ENCODE measurements at regions of chr1 and their contacts with region 1.

Region 1: GRCh38 chr1:173050865-173051264 is at the start of gene TNFSF18:
- DNase-seq: no peak
- ATAC-seq: no peak
- H3K4me3 ChIP-seq: no peak within 1 kb of the TSS
- H3K27ac ChIP-seq: no peak within 1 kb of the TSS
- H3K4me1 ChIP-seq: no peaks in the 10 kb centered on the region
- H3K27me3 ChIP-seq: no peaks in the 10 kb centered on the region; a peak in 1 of 4 replicates
- CTCF ChIP-seq: no peak
- EP300 ChIP-seq: no peak
- POLR2A ChIP-seq: no peak
- RAD21 ChIP-seq: no peak
- polyA plus RNA-seq, gene TNFSF18: not detected

Region 2: DNA sequence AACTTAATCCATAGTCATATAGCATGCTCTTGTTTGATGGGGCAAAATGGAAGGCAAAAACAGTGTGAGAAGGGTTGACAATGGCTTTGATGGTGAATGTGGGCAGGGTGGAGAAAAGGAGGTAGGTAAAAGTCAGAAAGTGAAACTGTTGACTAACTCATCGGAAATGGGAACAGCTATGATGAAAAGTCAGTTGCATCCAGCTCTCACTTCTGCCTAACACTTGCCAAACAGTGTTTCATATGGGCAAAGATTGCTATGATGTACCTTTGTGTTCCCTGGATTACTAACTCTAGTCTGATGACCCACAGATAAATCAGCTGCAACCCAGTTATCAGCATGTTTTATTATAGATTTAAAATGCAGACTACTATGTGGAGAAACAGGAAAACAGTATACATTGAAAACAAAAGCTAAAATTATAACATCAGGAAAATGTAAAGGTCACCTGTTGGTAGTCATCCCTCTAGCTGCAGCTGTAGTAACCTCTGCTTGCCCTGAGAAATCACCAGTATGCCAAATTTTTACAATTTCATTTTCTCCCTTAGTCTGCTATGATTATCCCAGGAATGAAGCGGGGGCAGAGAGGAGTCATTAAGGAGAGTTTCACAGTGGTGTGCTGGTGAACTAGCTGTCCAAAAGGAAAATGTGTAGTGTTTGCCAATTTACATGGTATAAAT is 11.8 kb before region 1 on chr1:
- CTCF ChIA-PET with region 1: interaction called, 4 read pairs
- POLR2A ChIA-PET with region 1: no interaction called
- RAD21 ChIA-PET with region 1: no interaction called
- SMC1A ChIA-PET with region 1: interaction called, 12 read pairs
- in situ Hi-C with region 1: no loop called
- intact Hi-C with region 1: no loop called
- DNase-seq: no peak
- ATAC-seq: peak; percentile 46; the same call in 2 of the 3 replicates
- H3K4me3 ChIP-seq: no peak overlapping the region
- H3K27ac ChIP-seq: no peak overlapping the region
- H3K4me1 ChIP-seq: peaks cover 7% of the 10 kb centered on the region
- H3K27me3 ChIP-seq: no peaks in the 10 kb centered on the region; a peak in 1 of 4 replicates
- CTCF ChIP-seq: no peak
- EP300 ChIP-seq: no peak
- POLR2A ChIP-seq: no peak
- RAD21 ChIP-seq: no peak